ENCODE measurements at regions of chr12 and their contacts with region 1.

Region 1: GRCh38 chr12:110826592-110827200 is 20.1 kb upstream of the CCDC63 start:
- DNase-seq: peak; percentile 72
- ATAC-seq: peak; percentile 93
- H3K4me3 ChIP-seq: no peak overlapping the region
- H3K27ac ChIP-seq: no peak overlapping the region
- H3K4me1 ChIP-seq: no peaks in the 10 kb centered on the region
- H3K27me3 ChIP-seq: peaks cover 9% of the 10 kb centered on the region
- CTCF ChIP-seq: peak; percentile 75
- POLR2A ChIP-seq: no peak
- RAD21 ChIP-seq: peak; percentile 71

Region 2: GRCh38 chr12:110217996-110218674 is 608.6 kb before region 1 on chr12:
- CTCF ChIA-PET with region 1: no interaction called
- POLR2A ChIA-PET with region 1: no interaction called
- dilution Hi-C with region 1: no loop called
- in situ Hi-C with region 1: no loop called
- intact Hi-C with region 1: no loop called
- DNase-seq: no peak
- ATAC-seq: no peak
- H3K4me3 ChIP-seq: no peak overlapping the region
- H3K27ac ChIP-seq: peak overlapping the region; percentile 26; the same call in 1 of the 2 replicates
- H3K4me1 ChIP-seq: peaks cover 3% of the 10 kb centered on the region; the same call in 1 of the 2 replicates
- H3K27me3 ChIP-seq: no peaks in the 10 kb centered on the region
- CTCF ChIP-seq: no peak
- POLR2A ChIP-seq: no peak
- RAD21 ChIP-seq: no peak

Region 3: GRCh38 chr12:110330544-110330943 is 496.2 kb before region 1 on chr12:
- CTCF ChIA-PET with region 1: no interaction called
- POLR2A ChIA-PET with region 1: no interaction called
- dilution Hi-C with region 1: no loop called
- in situ Hi-C with region 1: no loop called
- intact Hi-C with region 1: no loop called
- DNase-seq: peak; percentile 48
- ATAC-seq: peak; percentile 40; the same call in 1 of the 2 replicates
- H3K4me3 ChIP-seq: no peak overlapping the region
- H3K27ac ChIP-seq: no peak overlapping the region
- H3K4me1 ChIP-seq: peaks cover 2% of the 10 kb centered on the region; the same call in 1 of the 2 replicates
- H3K27me3 ChIP-seq: no peaks in the 10 kb centered on the region
- CTCF ChIP-seq: no peak
- POLR2A ChIP-seq: no peak
- RAD21 ChIP-seq: no peak

Region 4: DNA sequence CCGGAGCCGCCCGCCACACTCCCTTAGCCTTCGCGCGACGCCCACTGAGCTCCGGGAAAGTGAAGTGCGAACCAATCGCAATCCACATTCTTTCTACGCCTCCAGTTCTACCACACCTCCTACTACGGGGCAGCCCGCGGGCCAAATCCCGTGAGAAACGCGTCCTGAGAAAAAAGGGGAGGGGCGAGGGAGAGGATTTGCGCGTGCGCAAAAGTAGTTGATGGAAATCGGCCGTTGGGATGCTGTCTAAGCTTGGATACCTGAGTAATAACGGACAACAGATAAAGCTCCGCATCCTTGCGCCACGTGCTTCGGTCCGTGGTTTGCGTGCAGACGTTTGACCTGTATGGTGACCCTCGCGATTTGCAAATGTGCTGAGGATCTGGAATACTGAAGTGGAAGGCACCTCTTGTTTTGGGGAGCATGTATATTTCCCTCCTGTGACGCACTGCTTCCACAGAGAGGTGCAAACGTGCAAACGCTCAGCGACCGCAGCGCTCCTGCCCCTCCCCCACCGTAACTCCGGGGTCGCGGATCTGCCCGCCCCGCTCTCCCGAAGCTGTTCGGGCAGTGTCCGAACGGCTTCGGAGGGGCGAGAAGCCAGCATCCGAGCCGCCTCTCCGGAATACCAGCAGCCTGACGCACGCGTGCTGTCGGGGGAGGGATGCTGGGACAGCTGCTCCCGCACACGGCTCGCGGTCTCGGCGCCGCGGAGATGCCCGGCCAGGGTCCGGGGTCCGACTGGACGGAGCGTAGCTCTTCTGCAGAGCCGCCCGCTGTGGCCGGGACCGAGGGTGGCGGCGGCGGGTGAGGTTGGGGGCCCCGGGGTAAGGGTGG is 358.3 kb before region 1 on chr12 and contains the starts of genes FAM216A and GPN3:
- CTCF ChIA-PET with region 1: no interaction called
- POLR2A ChIA-PET with region 1: no interaction called
- dilution Hi-C with region 1: no loop called
- in situ Hi-C with region 1: no loop called
- intact Hi-C with region 1: loop called (anchors 2 kb)
- DNase-seq: peak; percentile 98
- ATAC-seq: peak; percentile 90
- H3K4me3 ChIP-seq: peak within 1 kb of the TSS; percentile 53
- H3K27ac ChIP-seq: peak within 1 kb of the TSS; percentile 86
- H3K4me1 ChIP-seq: peaks cover 3% of the 10 kb centered on the region; the same call in 1 of the 2 replicates
- H3K27me3 ChIP-seq: no peaks in the 10 kb centered on the region
- CTCF ChIP-seq: no peak
- POLR2A ChIP-seq: peak; percentile 83
- RAD21 ChIP-seq: no peak
- total RNA-seq, gene FAM216A: 14.0 and 18.9 TPM in 2 replicates
- total RNA-seq, gene GPN3: 7.7 and 24.7 TPM in 2 replicates

Region 5: GRCh38 chr12:110613771-110614684 is 212.7 kb before region 1 on chr12 and contains the start of gene TCTN1:
- CTCF ChIA-PET with region 1: no interaction called
- POLR2A ChIA-PET with region 1: no interaction called
- dilution Hi-C with region 1: no loop called
- in situ Hi-C with region 1: no loop called
- intact Hi-C with region 1: loop called (anchors 1 kb)
- DNase-seq: peak; percentile 91
- ATAC-seq: peak; percentile 100
- H3K4me3 ChIP-seq: peak within 1 kb of the TSS; percentile 64
- H3K27ac ChIP-seq: peak within 1 kb of the TSS; percentile 56
- H3K4me1 ChIP-seq: no peaks in the 10 kb centered on the region
- H3K27me3 ChIP-seq: no peaks in the 10 kb centered on the region
- CTCF ChIP-seq: no peak
- POLR2A ChIP-seq: peak; percentile 62; the same call in 1 of the 2 replicates
- RAD21 ChIP-seq: no peak
- total RNA-seq, gene TCTN1: 11.1 and 11.7 TPM in 2 replicates

Region 6: GRCh38 chr12:110883251-110883650 is 56.6 kb after region 1 on chr12:
- CTCF ChIA-PET with region 1: no interaction called
- POLR2A ChIA-PET with region 1: no interaction called
- dilution Hi-C with region 1: no loop called
- in situ Hi-C with region 1: loop called (anchors 5 kb)
- intact Hi-C with region 1: no loop called
- DNase-seq: no peak
- ATAC-seq: no peak
- H3K4me3 ChIP-seq: no peak overlapping the region
- H3K27ac ChIP-seq: no peak overlapping the region
- H3K4me1 ChIP-seq: no peaks in the 10 kb centered on the region
- H3K27me3 ChIP-seq: no peaks in the 10 kb centered on the region
- CTCF ChIP-seq: no peak
- POLR2A ChIP-seq: no peak
- RAD21 ChIP-seq: no peak

Region 7: DNA sequence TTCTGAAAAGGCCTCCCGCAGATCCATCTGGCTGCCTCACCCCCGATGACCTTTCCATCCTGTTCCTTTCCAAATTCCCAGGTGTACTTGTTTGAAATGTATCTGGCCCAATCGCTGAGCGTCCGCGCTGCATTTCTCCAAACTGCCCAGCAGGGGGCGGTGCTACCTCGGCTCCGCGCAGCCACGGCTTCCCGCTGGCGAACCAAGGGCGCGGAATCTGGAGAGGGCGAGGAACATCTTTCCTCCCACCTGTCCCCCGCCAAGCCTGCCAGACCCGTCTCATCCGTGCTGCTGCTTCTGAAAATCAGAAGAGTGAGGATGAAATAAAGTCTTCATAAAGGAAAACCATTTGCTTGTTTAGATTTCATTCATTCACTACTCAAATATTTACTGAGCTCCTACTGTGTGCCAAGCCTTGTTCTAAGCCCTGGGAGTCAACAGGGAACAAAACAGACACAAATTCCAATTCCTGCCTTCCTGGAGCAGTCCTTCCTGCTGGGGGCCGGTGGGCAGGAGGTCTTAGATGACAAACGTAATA is 110.5 kb after region 1 on chr12:
- CTCF ChIA-PET with region 1: no interaction called
- POLR2A ChIA-PET with region 1: no interaction called
- dilution Hi-C with region 1: no loop called
- in situ Hi-C with region 1: no loop called
- intact Hi-C with region 1: no loop called
- DNase-seq: peak; percentile 23
- ATAC-seq: peak; percentile 89
- H3K4me3 ChIP-seq: no peak overlapping the region
- H3K27ac ChIP-seq: no peak overlapping the region
- H3K4me1 ChIP-seq: no peaks in the 10 kb centered on the region
- H3K27me3 ChIP-seq: peaks cover 4% of the 10 kb centered on the region
- CTCF ChIP-seq: peak; percentile 78
- POLR2A ChIP-seq: no peak
- RAD21 ChIP-seq: peak; percentile 75